Calu3 (cell line): ENCODE measurements at regions of chr17 and their contacts with region 1.

Region 1: DNA sequence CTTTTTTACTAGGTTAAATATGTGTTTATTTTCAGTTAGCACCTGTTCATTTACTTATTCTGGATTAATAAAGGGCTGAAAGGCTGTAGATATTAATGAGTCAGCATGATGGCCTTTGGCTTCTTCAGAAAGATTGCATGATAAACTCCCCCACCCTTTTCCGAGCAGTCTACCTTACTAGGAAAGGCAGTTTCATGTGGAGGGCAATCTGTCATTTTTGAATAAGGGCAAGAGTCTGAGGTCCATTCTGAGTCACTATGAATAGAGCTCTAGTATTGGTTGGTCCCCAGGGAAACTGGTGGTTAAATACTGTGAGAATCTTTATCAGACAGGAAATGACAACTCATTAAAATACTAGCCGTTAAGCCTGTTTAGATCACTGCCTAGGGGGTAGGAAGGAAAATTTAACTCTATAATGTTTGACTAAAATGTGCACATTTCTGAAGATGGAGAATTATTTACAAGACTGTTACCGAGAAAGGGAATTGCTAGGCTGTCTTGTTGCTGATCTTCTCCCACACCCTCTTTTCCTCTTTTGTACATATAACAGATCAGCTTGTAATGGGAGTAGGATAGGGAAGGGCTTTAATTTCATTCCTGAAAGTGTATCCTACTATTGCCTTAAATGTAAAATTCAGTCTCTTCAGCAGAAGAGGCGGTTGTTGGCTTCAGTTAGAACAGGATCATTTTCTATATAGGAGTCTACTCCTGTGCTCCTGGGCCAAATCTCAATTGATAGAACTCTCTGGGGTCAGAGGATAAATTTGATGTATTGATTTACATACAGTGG is 63.3 kb downstream of the TUBD1 start:
- DNase-seq: peak; percentile 68
- H3K4me3 Mint-ChIP-seq: peak overlapping the region; percentile 49
- H3K27ac Mint-ChIP-seq: peak overlapping the region; percentile 97
- H3K4me1 Mint-ChIP-seq: peaks cover 16% of the 10 kb centered on the region
- H3K27me3 Mint-ChIP-seq: no peaks in the 10 kb centered on the region
- CTCF ChIP-seq: no peak

Region 2: DNA sequence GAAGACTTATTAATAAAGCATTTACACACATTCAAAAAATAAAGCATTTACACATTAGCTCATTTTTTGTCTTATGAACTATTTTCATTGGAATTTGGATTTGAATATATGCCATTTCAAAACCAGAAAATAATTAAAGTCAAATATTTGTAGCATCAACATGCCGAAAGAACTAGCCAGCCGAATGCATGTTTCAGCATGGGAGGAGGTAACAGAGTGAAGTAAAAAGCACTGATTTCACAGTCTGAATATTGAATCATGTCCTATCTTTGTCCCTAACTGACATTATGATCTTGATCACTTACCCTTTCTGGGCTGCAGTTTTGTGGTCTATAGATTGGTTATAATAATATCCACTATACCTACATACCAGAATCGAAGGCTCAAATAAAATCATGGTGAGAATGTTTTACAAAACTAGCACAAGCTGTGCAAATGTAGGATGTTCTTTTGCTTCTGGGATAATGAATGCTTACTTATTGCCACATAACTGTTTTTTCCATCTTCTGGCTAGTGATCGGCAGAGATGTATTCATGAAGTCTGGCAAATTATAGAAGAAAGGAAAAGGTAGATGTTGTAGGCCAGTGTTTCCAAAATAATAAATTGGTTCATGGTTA is 21.4 kb before region 1 on chr17:
- CTCF ChIA-PET with region 1: interaction called, 3 read pairs
- intact Hi-C with region 1: loop called (anchors 2 kb)
- DNase-seq: no peak
- H3K4me3 Mint-ChIP-seq: no peak overlapping the region
- H3K27ac Mint-ChIP-seq: peak overlapping the region; percentile 67
- H3K4me1 Mint-ChIP-seq: peaks cover 10% of the 10 kb centered on the region
- H3K27me3 Mint-ChIP-seq: no peaks in the 10 kb centered on the region
- CTCF ChIP-seq: no peak

Region 3: GRCh38 chr17:59876107-59876506 is 46.7 kb after region 1 on chr17:
- CTCF ChIA-PET with region 1: no interaction called
- intact Hi-C with region 1: no loop called
- DNase-seq: no peak
- H3K4me3 Mint-ChIP-seq: no peak overlapping the region
- H3K27ac Mint-ChIP-seq: no peak overlapping the region
- H3K4me1 Mint-ChIP-seq: no peaks in the 10 kb centered on the region
- H3K27me3 Mint-ChIP-seq: no peaks in the 10 kb centered on the region
- CTCF ChIP-seq: no peak

Region 4: DNA sequence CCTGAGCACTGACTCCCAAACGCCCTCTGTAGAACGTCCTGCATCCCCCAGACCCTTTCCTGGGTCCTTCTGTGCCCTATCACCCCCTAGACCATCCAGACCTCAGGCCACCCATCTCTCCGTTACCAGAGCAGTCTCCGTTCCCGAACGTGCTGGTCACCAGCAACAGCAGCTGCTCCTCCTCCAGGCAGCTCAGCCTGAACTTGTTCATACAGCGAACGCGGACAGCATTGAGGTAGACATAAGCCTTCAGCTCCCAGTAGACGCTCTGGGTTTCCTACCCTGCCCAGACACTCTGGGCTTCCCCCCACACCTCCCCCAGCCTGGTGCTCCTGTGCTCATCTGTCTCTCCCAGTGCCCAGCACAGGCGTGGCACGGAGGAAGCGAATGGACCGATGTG is 176.7 kb after region 1 on chr17:
- CTCF ChIA-PET with region 1: no interaction called
- intact Hi-C with region 1: no loop called
- DNase-seq: no peak
- H3K4me3 Mint-ChIP-seq: no peak overlapping the region
- H3K27ac Mint-ChIP-seq: no peak overlapping the region
- H3K4me1 Mint-ChIP-seq: no peaks in the 10 kb centered on the region
- H3K27me3 Mint-ChIP-seq: peaks cover 15% of the 10 kb centered on the region
- CTCF ChIP-seq: no peak